Posterior vena cava (tissue), 2 donors: ENCODE measurements at regions of chr16 and their contacts with region 1.

Region 1: DNA sequence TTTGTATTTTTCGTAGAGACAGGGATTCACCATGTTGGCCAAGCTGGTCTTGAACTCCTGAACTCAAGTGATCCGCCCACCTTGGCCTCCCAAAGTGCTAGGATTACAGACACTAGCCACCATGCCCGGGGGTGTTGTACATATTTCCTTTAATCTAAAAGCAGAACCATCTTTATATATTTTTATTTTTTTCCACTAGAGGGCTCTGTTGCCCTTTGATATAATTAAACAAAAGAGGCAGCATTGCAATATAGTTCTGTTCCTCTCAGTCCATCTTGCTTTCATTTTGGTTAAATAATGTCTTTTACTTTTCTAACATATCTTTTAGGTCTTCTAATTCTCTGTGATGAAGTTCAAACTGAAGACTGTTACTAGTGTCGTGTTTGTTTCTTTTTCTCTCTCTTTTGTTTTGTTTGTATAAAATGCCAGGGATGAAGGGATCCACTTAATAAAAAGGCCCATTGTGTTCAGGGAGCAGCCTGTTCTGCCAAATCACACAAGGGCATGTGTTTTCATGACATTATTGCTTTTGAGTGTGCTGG is 23.4 kb downstream of the WWOX start:
- DNase-seq: no peak

Region 2: GRCh38 chr16:78227855-78228254 is 105.0 kb after region 1 on chr16:
- intact Hi-C with region 1: loop called (anchors 2 to 5 kb)
- DNase-seq: no peak

Region 3: DNA sequence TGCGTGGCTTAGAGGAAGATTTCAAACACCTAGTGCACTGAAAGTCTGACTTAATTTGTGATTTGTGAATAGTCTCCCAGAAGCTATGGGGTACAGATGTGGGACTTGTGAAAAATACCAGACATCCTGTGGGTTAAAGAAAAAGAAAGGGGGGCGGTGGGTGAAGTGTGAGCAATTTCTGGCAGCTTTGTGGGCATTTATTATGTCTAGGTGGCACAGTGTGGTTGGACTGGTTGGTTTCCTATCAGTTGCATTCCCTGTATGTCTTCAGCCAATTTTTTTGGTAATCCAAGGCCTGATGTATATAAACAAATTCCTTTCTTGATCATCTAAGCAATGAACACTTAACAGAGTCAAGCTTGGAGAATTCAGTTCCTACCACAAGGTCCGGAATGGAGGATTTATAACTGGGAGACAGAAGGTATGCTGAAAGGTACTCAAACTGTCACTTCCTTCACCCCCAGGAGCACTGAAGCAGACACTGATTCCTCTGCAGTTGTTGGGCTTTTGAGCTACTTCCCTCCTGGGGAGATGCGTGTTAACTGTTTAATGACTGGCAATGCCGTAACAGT is 188.2 kb after region 1 on chr16:
- intact Hi-C with region 1: no loop called
- DNase-seq: no peak